Activated naive CD8-positive, alpha-beta T cell treated with anti-CD3 and anti-CD28 coated beads, Interleukin-2, amount 10 ng/mL, durations not matched to agents 7 days and 5 days (primary cell): ENCODE measurements at regions of chr22 and their contacts with region 1.

Region 1: DNA sequence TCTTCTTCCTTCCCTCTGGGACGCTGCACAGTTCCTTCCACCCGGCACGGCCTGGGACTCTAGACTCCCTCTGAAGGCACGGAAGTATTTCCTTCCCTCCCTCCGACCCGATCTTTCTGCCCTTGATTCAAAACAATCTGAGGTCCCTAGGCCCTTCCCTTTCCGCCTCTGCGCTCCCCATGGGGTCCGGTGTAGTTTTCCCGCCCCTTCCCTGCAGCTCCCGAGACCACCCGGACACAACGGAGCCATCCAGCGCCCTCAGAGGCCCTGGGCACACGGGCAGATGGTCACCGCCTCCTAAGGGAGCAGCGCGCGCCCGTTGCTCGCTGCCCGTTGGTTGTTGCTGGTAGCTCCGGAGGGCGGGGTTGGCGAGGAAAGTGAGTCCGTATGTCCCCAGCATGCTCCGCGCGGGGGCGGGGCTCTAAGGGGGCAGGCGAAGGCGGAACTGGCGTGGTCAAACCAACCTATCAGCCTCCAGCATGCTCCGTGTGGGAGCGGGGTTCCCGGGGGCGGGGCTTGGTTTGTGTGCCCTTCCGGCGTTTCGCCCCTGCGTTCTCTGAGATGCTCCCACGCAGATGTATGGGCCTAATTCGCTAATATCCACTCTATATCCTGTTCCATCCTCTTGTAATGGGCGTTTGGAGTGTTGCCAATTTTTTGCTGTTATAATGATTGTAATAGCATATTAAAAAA is 19.6 kb downstream of the MIF start:
- DNase-seq: peak; percentile 99
- ATAC-seq: peak; percentile 99
- H3K4me3 Mint-ChIP-seq: peak overlapping the region; percentile 93
- H3K27ac Mint-ChIP-seq: peak overlapping the region; percentile 96
- H3K4me1 Mint-ChIP-seq: peaks cover 29% of the 10 kb centered on the region
- H3K27me3 Mint-ChIP-seq: no peaks in the 10 kb centered on the region

Region 2: GRCh38 chr22:23849009-23850006 is 64.5 kb before region 1 on chr22:
- POLR2A ChIA-PET with region 1: no interaction called
- DNase-seq: peak; percentile 96
- ATAC-seq: peak; percentile 96
- H3K4me3 Mint-ChIP-seq: peak overlapping the region; percentile 32
- H3K27ac Mint-ChIP-seq: no peak overlapping the region
- H3K4me1 Mint-ChIP-seq: peaks cover 10% of the 10 kb centered on the region
- H3K27me3 Mint-ChIP-seq: peaks cover 17% of the 10 kb centered on the region

Region 3: DNA sequence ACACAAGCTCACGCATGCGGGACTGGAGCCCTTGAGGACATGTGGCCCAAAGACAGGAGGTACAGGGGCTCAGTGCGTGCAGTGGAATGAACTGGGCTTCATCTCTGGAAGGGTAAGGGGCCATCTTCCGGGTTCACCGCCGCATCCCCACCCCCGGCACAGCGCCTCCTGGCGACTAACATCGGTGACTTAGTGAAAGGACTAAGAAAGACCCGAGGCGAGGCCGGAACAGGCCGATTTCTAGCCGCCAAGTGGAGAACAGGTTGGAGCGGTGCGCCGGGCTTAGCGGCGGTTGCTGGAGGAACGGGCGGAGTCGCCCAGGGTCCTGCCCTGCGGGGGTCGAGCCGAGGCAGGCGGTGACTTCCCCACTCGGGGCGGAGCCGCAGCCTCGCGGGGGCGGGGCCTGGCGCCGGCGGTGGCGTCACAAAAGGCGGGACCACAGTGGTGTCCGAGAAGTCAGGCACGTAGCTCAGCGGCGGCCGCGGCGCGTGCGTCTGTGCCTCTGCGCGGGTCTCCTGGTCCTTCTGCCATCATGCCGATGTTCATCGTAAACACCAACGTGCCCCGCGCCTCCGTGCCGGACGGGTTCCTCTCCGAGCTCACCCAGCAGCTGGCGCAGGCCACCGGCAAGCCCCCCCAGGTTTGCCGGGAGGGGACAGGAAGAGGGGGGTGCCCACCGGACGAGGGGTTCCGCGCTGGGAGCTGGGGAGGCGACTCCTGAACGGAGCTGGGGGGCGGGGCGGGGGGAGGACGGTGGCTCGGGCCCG is 19.7 kb before region 1 on chr22 and contains the start of gene MIF:
- POLR2A ChIA-PET with region 1: interaction called, 53 read pairs
- DNase-seq: peak; percentile 100
- ATAC-seq: peak; percentile 89
- H3K4me3 Mint-ChIP-seq: peak within 1 kb of the TSS; percentile 96
- H3K27ac Mint-ChIP-seq: peak within 1 kb of the TSS; percentile 99
- H3K4me1 Mint-ChIP-seq: peaks cover 22% of the 10 kb centered on the region
- H3K27me3 Mint-ChIP-seq: no peaks in the 10 kb centered on the region
- total RNA-seq, gene MIF: 776 to 848 TPM

Region 4: GRCh38 chr22:23938328-23939016 is 24.7 kb after region 1 on chr22:
- POLR2A ChIA-PET with region 1: no interaction called
- DNase-seq: no peak
- ATAC-seq: no peak
- H3K4me3 Mint-ChIP-seq: no peak overlapping the region
- H3K27ac Mint-ChIP-seq: no peak overlapping the region
- H3K4me1 Mint-ChIP-seq: no peaks in the 10 kb centered on the region
- H3K27me3 Mint-ChIP-seq: peaks cover 2% of the 10 kb centered on the region